ENCODE measurements at regions of chr2 and their contacts with region 1.

Region 1: GRCh38 chr2:154046493-154046892 is 174.8 kb downstream of the GALNT13 start:
- DNase-seq: no peak
- ATAC-seq: no peak
- H3K4me3 ChIP-seq: no peak overlapping the region
- H3K27ac ChIP-seq: no peak overlapping the region
- H3K4me1 ChIP-seq: no peaks in the 10 kb centered on the region
- H3K27me3 ChIP-seq: no peaks in the 10 kb centered on the region
- CTCF ChIP-seq: no peak

Region 2: GRCh38 chr2:153953761-153954160 is 92.7 kb before region 1 on chr2:
- intact Hi-C with region 1: no loop called
- DNase-seq: no peak
- ATAC-seq: no peak
- H3K4me3 ChIP-seq: no peak overlapping the region
- H3K27ac ChIP-seq: no peak overlapping the region
- H3K4me1 ChIP-seq: no peaks in the 10 kb centered on the region
- H3K27me3 ChIP-seq: no peaks in the 10 kb centered on the region
- CTCF ChIP-seq: no peak

Region 3: GRCh38 chr2:154120706-154121105 is 74.2 kb after region 1 on chr2:
- intact Hi-C with region 1: loop called in 1 of 10 experiments (anchors 2 kb)
- DNase-seq: no peak
- ATAC-seq: no peak
- H3K4me3 ChIP-seq: no peak overlapping the region
- H3K27ac ChIP-seq: no peak overlapping the region
- H3K4me1 ChIP-seq: no peaks in the 10 kb centered on the region
- H3K27me3 ChIP-seq: no peaks in the 10 kb centered on the region
- CTCF ChIP-seq: no peak

Measured in heart right ventricle (tissue), 16 donors.